ENCODE measurements at regions of chr2 and their contacts with region 1.

Region 1: GRCh38 chr2:120693121-120693520 is 42.5 kb upstream of the GLI2 start:
- DNase-seq: no peak
- ATAC-seq: no peak
- H3K4me3 ChIP-seq: no peak overlapping the region
- H3K27ac ChIP-seq: no peak overlapping the region
- H3K4me1 ChIP-seq: peaks cover 12% of the 10 kb centered on the region; the same call in 2 of the 3 replicates
- CTCF ChIP-seq: no peak
- EP300 ChIP-seq: no peak
- POLR2A ChIP-seq: no peak
- RAD21 ChIP-seq: no peak

Region 2: DNA sequence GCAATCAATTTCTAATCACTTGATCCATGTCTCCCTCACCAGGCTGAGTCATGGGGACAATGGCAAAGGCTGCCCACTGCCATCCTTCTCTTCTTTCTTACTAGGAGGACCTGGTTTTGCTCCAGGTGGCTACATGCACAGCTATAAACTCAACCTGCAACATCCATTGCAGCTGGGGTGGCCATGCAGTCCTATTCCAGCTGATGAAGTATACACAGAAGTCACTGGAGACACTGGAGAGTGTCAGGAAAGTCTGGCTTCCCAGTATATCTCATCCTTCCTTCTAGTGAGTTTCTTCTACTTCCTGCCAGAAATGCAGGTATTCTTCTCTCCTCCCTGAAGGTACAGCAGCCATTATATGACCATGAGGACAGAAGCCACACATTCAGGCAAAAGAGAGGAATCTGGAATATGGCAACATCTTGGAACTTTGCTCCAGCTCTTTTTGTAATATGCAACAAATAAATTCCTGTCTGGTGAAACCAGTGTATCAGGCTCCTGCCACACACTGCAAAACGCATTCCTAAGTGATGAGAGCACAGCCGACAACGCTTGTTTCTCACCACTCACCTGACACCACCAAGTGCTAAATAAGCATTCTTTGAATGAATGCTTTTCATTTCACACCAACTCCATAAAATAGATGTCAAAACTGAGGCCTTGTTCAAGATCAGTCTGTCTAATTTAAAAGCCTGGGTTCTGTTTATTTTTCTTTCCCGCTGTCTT is 1201.2 kb before region 1 on chr2:
- CTCF ChIA-PET with region 1: no interaction called
- POLR2A ChIA-PET with region 1: no interaction called
- DNase-seq: peak; percentile 40 to 74
- ATAC-seq: peak; percentile 66 to 72; a peak in 5 of 6 replicates
- H3K4me3 ChIP-seq: no peak overlapping the region
- H3K27ac ChIP-seq: peak overlapping the region; percentile 55 to 78
- H3K4me1 ChIP-seq: peaks cover 59% of the 10 kb centered on the region
- CTCF ChIP-seq: no peak
- EP300 ChIP-seq: peak in 1 of 2 experiments; percentile 35; a peak in 1 of 5 replicates
- POLR2A ChIP-seq: no peak
- RAD21 ChIP-seq: no peak

Region 3: GRCh38 chr2:120625865-120626560 is 67.1 kb before region 1 on chr2:
- CTCF ChIA-PET with region 1: no interaction called
- POLR2A ChIA-PET with region 1: no interaction called
- DNase-seq: no peak
- ATAC-seq: no peak
- H3K4me3 ChIP-seq: no peak overlapping the region
- H3K27ac ChIP-seq: no peak overlapping the region
- H3K4me1 ChIP-seq: no peaks in the 10 kb centered on the region
- CTCF ChIP-seq: no peak
- EP300 ChIP-seq: no peak
- POLR2A ChIP-seq: no peak
- RAD21 ChIP-seq: no peak

Region 4: GRCh38 chr2:120703330-120703994 is 10.3 kb after region 1 on chr2:
- CTCF ChIA-PET with region 1: interaction called, 43 read pairs
- POLR2A ChIA-PET with region 1: no interaction called
- DNase-seq: peak in 1 of 2 experiments; percentile 45
- ATAC-seq: peak; percentile 72 to 76
- H3K4me3 ChIP-seq: no peak overlapping the region
- H3K27ac ChIP-seq: peak overlapping the region in 1 of 2 experiments; percentile 62; a peak in 5 of 6 replicates
- H3K4me1 ChIP-seq: peaks cover 23% of the 10 kb centered on the region
- CTCF ChIP-seq: no peak
- EP300 ChIP-seq: no peak
- POLR2A ChIP-seq: no peak
- RAD21 ChIP-seq: no peak

Region 5: DNA sequence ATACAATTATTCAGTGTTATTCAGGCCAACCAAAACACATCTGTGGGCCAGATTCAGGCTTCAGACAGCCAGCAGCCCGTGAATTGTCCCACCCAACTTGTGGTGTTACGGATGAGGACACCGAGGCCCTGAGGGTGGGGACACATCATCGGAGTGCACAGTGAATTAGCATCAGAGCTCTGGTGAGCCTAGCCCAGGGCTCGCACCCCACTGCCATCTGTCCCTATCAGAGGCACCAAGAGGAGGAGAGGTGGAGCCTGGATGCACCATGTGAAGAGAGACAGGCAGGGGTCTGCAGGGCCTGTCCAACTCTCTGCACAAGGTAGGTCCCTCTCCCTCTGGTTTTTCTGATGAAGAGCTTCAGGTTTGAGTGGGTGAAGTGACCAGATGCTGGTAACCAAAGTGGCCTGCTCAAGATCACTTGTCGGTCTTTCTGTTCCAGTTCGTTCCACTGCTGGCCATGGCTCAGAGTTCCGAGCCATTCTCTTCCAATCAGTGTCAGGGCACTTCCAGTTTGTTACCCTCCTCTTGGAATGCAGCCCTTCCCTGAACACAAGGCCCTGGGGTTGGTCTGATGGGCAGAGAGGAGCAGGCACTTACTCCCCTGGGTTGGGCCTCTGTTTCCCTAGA is 27.7 kb after region 1 on chr2:
- CTCF ChIA-PET with region 1: interaction called, 24 read pairs
- POLR2A ChIA-PET with region 1: no interaction called
- DNase-seq: no peak
- ATAC-seq: no peak
- H3K4me3 ChIP-seq: no peak overlapping the region
- H3K27ac ChIP-seq: peak overlapping the region in 1 of 2 experiments; percentile 82; a peak in 4 of 6 replicates
- H3K4me1 ChIP-seq: peaks cover 19% of the 10 kb centered on the region
- CTCF ChIP-seq: no peak
- EP300 ChIP-seq: no peak
- POLR2A ChIP-seq: no peak
- RAD21 ChIP-seq: no peak

Region 6: GRCh38 chr2:120758181-120759144 is 65.3 kb after region 1 on chr2:
- CTCF ChIA-PET with region 1: interaction called, 10 read pairs
- POLR2A ChIA-PET with region 1: no interaction called
- DNase-seq: no peak
- ATAC-seq: no peak; a peak in 1 of 6 replicates
- H3K4me3 ChIP-seq: no peak overlapping the region
- H3K27ac ChIP-seq: peak overlapping the region in 1 of 2 experiments; percentile 53; a peak in 2 of 6 replicates
- H3K4me1 ChIP-seq: peaks cover 69% of the 10 kb centered on the region
- CTCF ChIP-seq: no peak
- EP300 ChIP-seq: no peak
- POLR2A ChIP-seq: no peak
- RAD21 ChIP-seq: no peak

Region 7: GRCh38 chr2:120934574-120935340 is 241.6 kb after region 1 on chr2:
- CTCF ChIA-PET with region 1: interaction called, 12 read pairs
- POLR2A ChIA-PET with region 1: interaction called, 5 read pairs
- DNase-seq: peak; percentile 97 to 99
- ATAC-seq: peak; percentile 67 to 77
- H3K4me3 ChIP-seq: peak overlapping the region; percentile 21
- H3K27ac ChIP-seq: peak overlapping the region; percentile 97 to 98
- H3K4me1 ChIP-seq: peaks cover 77% of the 10 kb centered on the region
- CTCF ChIP-seq: no peak
- EP300 ChIP-seq: peak; percentile 98
- POLR2A ChIP-seq: no peak
- RAD21 ChIP-seq: peak in 1 of 2 experiments; percentile 51; a peak in 3 of 5 replicates

Region 8: GRCh38 chr2:121058852-121059558 is 365.9 kb after region 1 on chr2:
- CTCF ChIA-PET with region 1: interaction called, 858 read pairs
- POLR2A ChIA-PET with region 1: no interaction called
- DNase-seq: no peak
- ATAC-seq: no peak
- H3K4me3 ChIP-seq: no peak overlapping the region
- H3K27ac ChIP-seq: peak overlapping the region in 1 of 2 experiments; percentile 78; a peak in 2 of 6 replicates
- H3K4me1 ChIP-seq: peaks cover 7% of the 10 kb centered on the region; the same call in 2 of the 3 replicates
- CTCF ChIP-seq: no peak
- EP300 ChIP-seq: no peak
- POLR2A ChIP-seq: no peak
- RAD21 ChIP-seq: no peak

Region 9: GRCh38 chr2:121095257-121096080 is 402.3 kb after region 1 on chr2:
- CTCF ChIA-PET with region 1: interaction called, 10 read pairs
- POLR2A ChIA-PET with region 1: no interaction called
- DNase-seq: peak; percentile 79
- ATAC-seq: peak; percentile 87 to 94
- H3K4me3 ChIP-seq: no peak overlapping the region
- H3K27ac ChIP-seq: no peak overlapping the region
- H3K4me1 ChIP-seq: no peaks in the 10 kb centered on the region
- CTCF ChIP-seq: peak; percentile 78
- EP300 ChIP-seq: no peak
- POLR2A ChIP-seq: no peak
- RAD21 ChIP-seq: peak; percentile 81 to 87